Activated CD4-positive, alpha-beta memory T cell treated with anti-CD3 and anti-CD28 coated beads, Interleukin-2, amount 10 ng/mL, durations not matched to agents 7 days and 5 days (primary cell): ENCODE measurements at regions of chr1 and their contacts with region 1.

Region 1: DNA sequence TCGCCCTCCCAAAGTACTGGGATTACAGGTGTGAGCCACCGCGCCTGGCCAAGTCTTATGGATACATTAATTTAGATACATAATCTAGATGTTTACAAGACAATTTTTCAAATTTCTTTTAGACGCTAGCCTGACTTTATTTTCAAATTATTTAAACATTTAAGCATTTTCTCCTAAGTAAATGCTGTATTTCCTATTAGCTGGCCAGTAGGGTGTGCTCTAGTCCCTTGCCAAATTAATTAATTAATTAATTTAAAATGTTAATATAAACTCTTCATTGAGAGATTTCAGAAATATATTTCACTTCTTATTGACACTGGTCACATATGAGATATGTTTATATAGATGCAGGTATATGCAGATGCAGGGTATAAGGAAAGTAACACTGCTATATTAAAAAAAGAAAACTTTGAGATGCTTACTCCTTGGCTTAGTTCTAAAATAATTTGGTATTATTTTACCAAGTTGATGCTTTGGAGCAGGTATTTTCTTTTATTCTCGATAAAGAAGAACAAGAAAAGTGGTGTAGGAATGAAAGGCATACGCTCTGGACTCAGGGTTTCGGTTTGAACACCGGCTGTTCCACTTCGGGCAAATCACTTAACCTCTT is 5.2 kb upstream of the ERRFI1 start:
- DNase-seq: no peak
- H3K4me3 Mint-ChIP-seq: no peak overlapping the region
- H3K27ac Mint-ChIP-seq: no peak overlapping the region
- H3K4me1 Mint-ChIP-seq: peaks cover 6% of the 10 kb centered on the region
- H3K27me3 Mint-ChIP-seq: peaks cover 21% of the 10 kb centered on the region

Region 2: DNA sequence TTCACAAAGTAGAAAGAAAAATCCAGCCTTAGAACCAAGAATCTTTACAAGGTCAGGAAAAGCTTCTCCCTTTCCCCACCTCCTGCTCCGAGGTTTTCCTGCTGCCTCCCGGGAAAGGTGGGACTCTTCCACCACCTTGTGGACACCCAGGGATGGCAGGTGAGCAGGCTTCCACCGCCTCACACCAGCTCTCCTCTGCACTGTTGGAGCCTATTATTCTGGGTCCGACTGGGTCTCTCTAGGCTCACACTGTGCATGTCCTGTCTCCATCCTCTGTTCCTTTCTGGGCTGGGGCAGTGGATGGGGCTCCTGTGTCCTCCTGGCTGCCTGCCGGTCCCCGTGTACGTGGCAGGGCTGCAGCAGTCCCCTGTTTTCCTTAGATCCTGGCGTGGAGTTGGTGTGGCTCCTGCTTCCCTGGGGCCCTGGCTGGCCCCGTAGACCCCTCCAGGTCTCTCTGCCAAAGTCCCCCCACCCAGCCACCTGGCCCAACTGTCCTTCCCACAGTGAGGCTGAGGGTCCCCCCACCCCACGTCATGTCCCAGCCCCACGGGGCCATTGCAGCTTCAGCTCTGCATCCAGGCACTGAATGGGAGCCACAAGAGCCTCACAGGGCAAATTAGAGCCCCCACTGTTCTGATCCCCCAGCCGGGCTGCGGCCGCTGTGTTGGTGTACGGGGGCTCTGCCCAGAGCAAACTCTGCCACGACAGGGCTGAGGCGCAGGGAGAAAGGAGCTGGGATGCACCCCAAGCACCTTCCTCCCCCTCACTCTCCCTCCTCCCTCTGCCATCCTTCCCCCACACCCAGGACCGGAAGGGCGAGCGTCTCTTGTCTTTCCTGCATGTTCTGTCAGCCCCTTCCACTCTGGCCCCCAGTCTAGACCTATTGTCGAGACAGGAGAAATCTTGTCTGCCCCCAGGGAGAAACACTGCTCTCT is 283.3 kb after region 1 on chr1:
- CTCF ChIA-PET with region 1: interaction called, 10 read pairs
- POLR2A ChIA-PET with region 1: interaction called, 4 read pairs
- DNase-seq: peak; percentile 56
- H3K4me3 Mint-ChIP-seq: no peak overlapping the region
- H3K27ac Mint-ChIP-seq: no peak overlapping the region
- H3K4me1 Mint-ChIP-seq: peaks cover 21% of the 10 kb centered on the region
- H3K27me3 Mint-ChIP-seq: peaks cover 33% of the 10 kb centered on the region